ENCODE measurements at regions of chr4 and their contacts with region 1.

Region 1: GRCh38 chr4:20544645-20545044 is 155.6 kb upstream of the PACRGL start:
- DNase-seq: peak; percentile 71
- ATAC-seq: peak; percentile 90
- H3K4me3 ChIP-seq: no peak overlapping the region
- H3K27ac ChIP-seq: no peak overlapping the region
- H3K4me1 ChIP-seq: no peaks in the 10 kb centered on the region
- H3K27me3 ChIP-seq: no peaks in the 10 kb centered on the region
- CTCF ChIP-seq: peak; percentile 76
- POLR2A ChIP-seq: no peak
- RAD21 ChIP-seq: peak; percentile 78

Region 2: DNA sequence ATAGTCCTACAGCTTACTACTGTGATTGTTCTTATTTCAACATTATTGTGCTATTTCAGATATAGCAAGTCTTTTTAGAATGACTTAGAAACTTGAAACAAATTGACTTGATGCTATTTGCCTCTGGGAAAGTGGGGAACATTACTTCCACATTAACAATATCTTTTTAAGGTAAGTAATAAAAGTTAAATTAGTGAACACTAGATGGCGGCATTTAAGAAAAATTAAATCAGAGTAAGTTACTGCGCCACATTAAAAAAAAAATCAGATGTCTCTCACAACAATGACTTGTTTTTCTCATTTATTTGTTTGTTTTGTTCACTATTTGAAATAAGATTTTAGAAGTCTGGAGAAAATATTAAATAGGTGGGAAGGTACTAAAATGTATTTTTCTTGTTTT is 1319.8 kb before region 1 on chr4:
- CTCF ChIA-PET with region 1: no interaction called
- POLR2A ChIA-PET with region 1: no interaction called
- dilution Hi-C with region 1: no loop called
- in situ Hi-C with region 1: no loop called
- intact Hi-C with region 1: loop called (anchors 10 kb)
- DNase-seq: peak; percentile 42
- ATAC-seq: no peak
- H3K4me3 ChIP-seq: no peak overlapping the region
- H3K27ac ChIP-seq: no peak overlapping the region
- H3K4me1 ChIP-seq: no peaks in the 10 kb centered on the region
- H3K27me3 ChIP-seq: no peaks in the 10 kb centered on the region
- CTCF ChIP-seq: peak; percentile 41
- POLR2A ChIP-seq: no peak
- RAD21 ChIP-seq: peak; percentile 49

Region 3: DNA sequence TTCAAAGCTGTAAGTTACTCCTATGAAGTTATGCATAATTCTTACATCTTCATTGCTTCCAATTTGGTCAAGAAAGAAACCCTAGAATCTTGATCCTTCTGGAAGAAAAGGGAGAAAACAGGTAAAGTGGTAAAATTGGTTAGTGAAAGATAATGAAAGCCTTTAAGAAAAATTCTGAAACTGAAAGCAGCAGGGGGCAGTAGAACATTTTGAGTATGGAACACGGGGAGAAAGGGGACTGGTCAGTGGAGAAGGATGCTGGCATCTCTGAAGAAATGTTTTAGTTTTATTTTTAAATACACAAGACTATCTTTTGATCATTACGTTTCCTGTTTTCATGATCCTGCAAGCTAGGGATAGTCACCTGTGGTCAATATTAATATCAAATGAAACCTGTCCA is 238.7 kb before region 1 on chr4:
- CTCF ChIA-PET with region 1: interaction called, 5 read pairs
- POLR2A ChIA-PET with region 1: no interaction called
- dilution Hi-C with region 1: no loop called
- in situ Hi-C with region 1: loop called (anchors 10 kb)
- intact Hi-C with region 1: loop called (anchors 1 kb)
- DNase-seq: peak; percentile 59
- ATAC-seq: peak; percentile 65
- H3K4me3 ChIP-seq: no peak overlapping the region
- H3K27ac ChIP-seq: no peak overlapping the region
- H3K4me1 ChIP-seq: no peaks in the 10 kb centered on the region
- H3K27me3 ChIP-seq: no peaks in the 10 kb centered on the region
- CTCF ChIP-seq: peak; percentile 54
- POLR2A ChIP-seq: no peak
- RAD21 ChIP-seq: peak; percentile 47

Region 4: DNA sequence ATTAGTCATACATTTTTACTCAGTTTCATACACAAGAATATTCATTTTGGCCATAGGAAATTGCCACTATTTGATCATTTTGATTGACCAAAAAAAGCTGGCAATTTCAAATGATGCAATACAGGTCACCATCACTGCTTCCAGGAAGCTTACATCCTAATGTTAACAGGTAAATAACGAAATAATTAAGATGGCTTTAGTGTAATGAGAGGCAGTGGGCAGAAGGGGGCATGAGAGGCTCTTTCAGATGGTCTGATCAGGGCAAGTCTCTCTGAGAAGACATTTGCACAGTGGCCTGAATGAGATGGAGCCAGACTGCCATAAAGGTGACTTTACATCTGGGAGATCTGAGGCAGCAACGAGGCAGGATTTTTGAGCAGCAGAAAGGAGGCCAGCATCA is 122.2 kb before region 1 on chr4:
- CTCF ChIA-PET with region 1: interaction called, 3 read pairs
- POLR2A ChIA-PET with region 1: no interaction called
- dilution Hi-C with region 1: no loop called
- in situ Hi-C with region 1: loop called (anchors 5 kb)
- intact Hi-C with region 1: loop called (anchors 1 kb)
- DNase-seq: peak; percentile 52
- ATAC-seq: peak; percentile 72
- H3K4me3 ChIP-seq: no peak overlapping the region
- H3K27ac ChIP-seq: no peak overlapping the region
- H3K4me1 ChIP-seq: no peaks in the 10 kb centered on the region
- H3K27me3 ChIP-seq: no peaks in the 10 kb centered on the region
- CTCF ChIP-seq: peak; percentile 62
- POLR2A ChIP-seq: no peak
- RAD21 ChIP-seq: peak; percentile 61

Region 5: DNA sequence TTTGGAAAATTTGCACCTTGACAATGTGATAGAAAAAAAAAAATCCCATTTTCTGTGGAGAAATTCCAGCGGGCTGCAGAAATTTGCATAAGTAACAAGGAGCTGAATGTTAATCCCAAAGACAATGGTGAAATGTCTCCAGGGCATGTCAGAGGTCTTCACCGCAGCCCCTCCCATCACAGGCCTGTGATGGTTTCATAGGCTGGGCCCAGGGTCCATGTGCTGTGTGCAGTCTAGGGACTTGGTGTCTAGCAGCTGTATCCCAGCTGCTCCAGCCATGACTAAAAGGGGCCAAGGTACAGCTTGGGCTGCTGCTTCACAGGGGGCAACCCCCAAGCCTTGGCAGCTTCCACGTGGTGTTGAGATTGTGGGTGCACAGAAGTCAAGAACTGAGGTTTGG is 1886.0 kb after region 1 on chr4:
- CTCF ChIA-PET with region 1: interaction called, 10 read pairs
- POLR2A ChIA-PET with region 1: no interaction called
- dilution Hi-C with region 1: no loop called
- in situ Hi-C with region 1: no loop called
- intact Hi-C with region 1: no loop called
- DNase-seq: no peak
- ATAC-seq: no peak
- H3K4me3 ChIP-seq: no peak overlapping the region
- H3K27ac ChIP-seq: no peak overlapping the region
- H3K4me1 ChIP-seq: no peaks in the 10 kb centered on the region
- H3K27me3 ChIP-seq: no peaks in the 10 kb centered on the region
- CTCF ChIP-seq: no peak
- POLR2A ChIP-seq: no peak
- RAD21 ChIP-seq: no peak